HAP-1 (cell line): ENCODE measurements at regions of chr2 and their contacts with region 1.

Region 1: DNA sequence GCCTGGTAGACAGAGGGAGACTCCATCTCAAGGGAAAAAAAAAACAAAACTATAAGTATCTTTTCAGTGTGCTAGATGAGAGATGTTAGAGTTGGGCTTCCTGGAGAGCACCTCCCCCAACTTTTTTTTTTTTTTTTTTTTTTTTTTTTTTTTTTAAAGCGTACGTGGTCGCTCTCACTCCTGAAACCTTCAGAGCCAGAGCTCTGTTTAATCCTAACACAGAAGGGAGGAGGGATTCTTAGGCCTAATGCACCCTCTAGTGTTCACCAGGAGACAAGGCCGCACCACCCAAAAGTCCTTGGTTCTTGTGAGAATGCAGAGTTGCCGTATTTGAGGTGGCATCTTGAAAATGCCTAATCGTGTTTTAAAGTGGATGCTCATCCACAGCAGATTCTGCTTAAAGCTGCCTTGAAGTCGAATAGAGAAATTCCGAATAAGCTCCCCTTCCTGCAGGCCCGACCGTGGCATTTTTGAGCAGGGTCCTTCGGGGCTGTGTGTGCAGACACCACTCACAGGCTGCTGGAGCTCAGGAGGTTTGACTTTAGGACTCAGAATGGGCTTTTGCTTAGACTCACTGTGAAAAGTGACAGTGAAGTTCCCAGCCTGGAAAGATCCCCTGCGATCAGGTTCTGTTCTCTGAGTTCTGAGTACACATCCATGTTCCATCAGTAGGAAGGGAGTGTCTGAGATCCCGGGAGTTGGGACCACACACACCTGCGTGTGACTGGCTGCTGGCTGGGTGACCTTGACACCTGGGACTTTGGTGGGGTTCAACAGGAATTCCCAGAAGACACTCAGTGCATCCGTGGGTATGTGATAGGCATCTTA is 252.6 kb downstream of the AGAP1 start:
- DNase-seq: peak; percentile 64 to 72
- H3K4me3 ChIP-seq: no peak overlapping the region
- H3K4me1 ChIP-seq: no peaks in the 10 kb centered on the region
- H3K27me3 ChIP-seq: no peaks in the 10 kb centered on the region

Region 2: GRCh38 chr2:235135990-235136561 is 610.4 kb before region 1 on chr2:
- in situ Hi-C with region 1: loop called (anchors 10 kb)
- DNase-seq: peak; percentile 62 to 88
- H3K4me3 ChIP-seq: no peak overlapping the region
- H3K4me1 ChIP-seq: no peaks in the 10 kb centered on the region
- H3K27me3 ChIP-seq: no peaks in the 10 kb centered on the region

Region 3: DNA sequence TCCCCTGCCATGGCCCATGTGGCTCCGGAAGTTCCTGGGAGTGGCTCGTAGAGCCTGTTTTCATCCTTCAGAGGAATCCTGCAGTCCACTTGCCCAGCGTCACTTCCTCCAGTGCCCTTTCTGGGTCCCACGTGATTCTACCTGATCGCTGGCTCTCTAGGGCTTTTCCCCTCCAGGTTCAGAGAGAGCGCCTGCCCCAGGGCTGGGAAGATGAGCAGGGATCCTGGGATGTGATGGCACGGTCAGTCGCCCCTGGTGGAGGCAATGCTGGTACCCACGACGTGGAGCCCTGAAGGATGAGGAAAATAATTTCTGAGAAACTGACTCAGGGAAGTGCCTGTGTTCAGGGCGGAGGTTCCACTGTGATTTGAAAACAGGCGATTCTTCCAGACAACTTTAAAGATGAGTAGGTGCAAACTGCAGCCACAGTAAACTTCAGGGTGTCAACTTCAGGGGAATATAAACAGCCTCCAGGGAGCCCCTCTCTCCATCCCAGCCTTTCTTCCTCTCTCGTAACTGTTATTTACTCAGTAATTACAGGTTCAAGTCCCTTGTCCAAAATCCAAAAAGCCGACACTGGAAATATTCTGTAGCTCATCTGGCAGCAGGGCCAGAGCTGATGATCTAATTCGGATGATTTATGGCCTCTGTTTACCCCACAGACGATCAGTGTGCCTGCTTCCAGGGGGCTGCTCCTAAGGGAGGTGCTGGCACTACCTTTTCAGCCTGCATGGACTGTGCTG is 146.7 kb before region 1 on chr2:
- in situ Hi-C with region 1: loop called (anchors 5 kb)
- DNase-seq: no peak
- H3K4me3 ChIP-seq: no peak overlapping the region
- H3K4me1 ChIP-seq: no peaks in the 10 kb centered on the region
- H3K27me3 ChIP-seq: no peaks in the 10 kb centered on the region

Region 4: GRCh38 chr2:235685024-235685721 is 61.3 kb before region 1 on chr2:
- in situ Hi-C with region 1: no loop called
- DNase-seq: no peak
- H3K4me3 ChIP-seq: no peak overlapping the region
- H3K4me1 ChIP-seq: no peaks in the 10 kb centered on the region
- H3K27me3 ChIP-seq: no peaks in the 10 kb centered on the region